ENCODE measurements at regions of chr7 and their contacts with region 1.

Region 1: DNA sequence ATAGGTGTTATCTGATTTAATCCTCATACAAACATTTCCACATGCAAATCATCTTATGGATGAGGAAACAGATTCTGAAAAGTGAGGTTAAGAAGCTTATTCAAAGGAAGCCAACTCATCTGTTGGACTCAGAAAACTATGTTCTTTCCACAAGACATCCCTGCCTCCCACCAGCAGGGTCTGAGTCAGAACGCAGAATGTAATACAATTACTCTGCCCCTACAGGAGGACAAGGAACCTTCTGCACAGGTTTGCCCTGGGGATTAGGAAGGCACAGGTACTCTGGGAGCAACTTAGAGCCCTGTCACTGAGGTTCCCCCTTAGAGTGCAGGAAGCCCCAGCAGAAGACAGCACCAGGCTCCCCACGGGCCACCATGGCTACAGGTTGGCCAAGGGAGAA is 255.7 kb downstream of the TNS3 start:
- DNase-seq: peak; percentile 53
- H3K4me3 ChIP-seq: peak overlapping the region; percentile 31
- H3K27ac ChIP-seq: peak overlapping the region; percentile 74
- H3K27me3 ChIP-seq: no peaks in the 10 kb centered on the region
- CTCF ChIP-seq: peak; percentile 67

Region 2: GRCh38 chr7:47337531-47337930 is 11.3 kb after region 1 on chr7:
- CTCF ChIA-PET with region 1: no interaction called
- POLR2A ChIA-PET with region 1: interaction called, 15 read pairs
- DNase-seq: no peak
- H3K4me3 ChIP-seq: no peak overlapping the region
- H3K27ac ChIP-seq: peak overlapping the region; percentile 12
- H3K27me3 ChIP-seq: no peaks in the 10 kb centered on the region
- CTCF ChIP-seq: no peak

Region 3: DNA sequence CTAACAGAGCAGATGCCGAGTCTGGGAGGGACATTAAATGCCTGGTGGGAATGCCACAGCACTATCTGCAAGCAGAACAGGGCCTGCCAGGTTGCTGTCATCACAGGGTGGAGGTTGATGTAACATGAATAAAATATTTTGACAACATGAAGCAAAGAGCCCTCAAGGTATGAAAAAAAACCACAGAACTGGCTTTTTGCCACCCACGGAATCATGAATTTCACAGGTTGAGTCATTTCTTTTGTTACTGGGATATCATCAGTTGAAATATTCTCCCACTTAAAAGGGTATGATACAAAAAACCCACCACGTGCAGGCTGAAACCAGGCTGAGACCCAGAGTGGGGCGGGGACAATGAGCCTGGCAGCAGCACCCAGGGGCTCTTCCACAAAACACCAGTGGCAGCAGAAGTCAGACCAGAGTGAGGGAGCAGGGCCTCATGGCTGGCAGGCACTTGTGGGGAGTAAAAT is 35.6 kb after region 1 on chr7:
- CTCF ChIA-PET with region 1: no interaction called
- POLR2A ChIA-PET with region 1: no interaction called
- DNase-seq: peak; percentile 69
- H3K4me3 ChIP-seq: no peak overlapping the region
- H3K27ac ChIP-seq: peak overlapping the region; percentile 40
- H3K27me3 ChIP-seq: no peaks in the 10 kb centered on the region
- CTCF ChIP-seq: no peak

Measured in AG04450 (cell line).